ENCODE measurements at regions of chr5 and their contacts with region 1.

Region 1: DNA sequence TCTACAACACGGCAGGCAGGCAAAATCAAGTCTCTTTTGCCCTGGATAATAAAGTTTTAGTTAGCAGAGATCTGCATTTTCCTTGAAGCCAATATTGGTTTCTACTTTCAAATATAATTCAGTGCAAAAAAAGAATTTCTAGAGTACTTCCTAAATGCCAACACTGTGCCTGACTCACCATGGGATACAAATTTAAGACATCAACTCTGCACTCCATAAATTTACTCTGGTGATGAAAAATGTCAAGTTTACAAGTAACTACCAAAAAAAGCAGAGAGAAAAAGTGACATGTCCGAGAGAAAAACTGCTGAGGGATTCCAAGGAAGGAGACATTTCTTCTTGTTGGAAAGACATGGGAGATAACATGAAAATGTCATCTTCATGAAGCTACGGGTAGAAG is 119.7 kb downstream of the RAPGEF6 start:
- DNase-seq: no peak
- H3K4me3 ChIP-seq: no peak overlapping the region
- H3K27me3 ChIP-seq: no peaks in the 10 kb centered on the region
- CTCF ChIP-seq: no peak

Region 2: DNA sequence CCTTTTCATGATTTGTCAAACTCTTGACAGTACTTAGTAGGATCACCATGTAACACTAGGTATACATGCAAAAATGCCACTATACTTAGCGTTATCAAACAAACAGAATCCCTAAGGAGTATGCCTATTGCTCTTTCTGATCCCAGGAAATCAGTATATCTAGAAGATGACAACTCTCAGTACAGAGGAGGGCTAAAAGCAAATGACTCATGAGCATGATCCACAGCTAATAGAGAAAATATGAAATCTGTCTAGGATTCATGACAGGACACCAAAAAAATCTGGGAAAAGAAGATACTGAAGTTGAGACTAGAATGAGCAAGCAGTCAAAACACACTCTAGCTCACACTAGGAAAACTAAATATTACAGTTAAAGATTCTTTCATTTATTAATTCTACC is 30.5 kb after region 1 on chr5:
- CTCF ChIA-PET with region 1: no interaction called
- POLR2A ChIA-PET with region 1: no interaction called
- DNase-seq: no peak
- H3K4me3 ChIP-seq: no peak overlapping the region
- H3K27me3 ChIP-seq: no peaks in the 10 kb centered on the region
- CTCF ChIP-seq: no peak

Region 3: DNA sequence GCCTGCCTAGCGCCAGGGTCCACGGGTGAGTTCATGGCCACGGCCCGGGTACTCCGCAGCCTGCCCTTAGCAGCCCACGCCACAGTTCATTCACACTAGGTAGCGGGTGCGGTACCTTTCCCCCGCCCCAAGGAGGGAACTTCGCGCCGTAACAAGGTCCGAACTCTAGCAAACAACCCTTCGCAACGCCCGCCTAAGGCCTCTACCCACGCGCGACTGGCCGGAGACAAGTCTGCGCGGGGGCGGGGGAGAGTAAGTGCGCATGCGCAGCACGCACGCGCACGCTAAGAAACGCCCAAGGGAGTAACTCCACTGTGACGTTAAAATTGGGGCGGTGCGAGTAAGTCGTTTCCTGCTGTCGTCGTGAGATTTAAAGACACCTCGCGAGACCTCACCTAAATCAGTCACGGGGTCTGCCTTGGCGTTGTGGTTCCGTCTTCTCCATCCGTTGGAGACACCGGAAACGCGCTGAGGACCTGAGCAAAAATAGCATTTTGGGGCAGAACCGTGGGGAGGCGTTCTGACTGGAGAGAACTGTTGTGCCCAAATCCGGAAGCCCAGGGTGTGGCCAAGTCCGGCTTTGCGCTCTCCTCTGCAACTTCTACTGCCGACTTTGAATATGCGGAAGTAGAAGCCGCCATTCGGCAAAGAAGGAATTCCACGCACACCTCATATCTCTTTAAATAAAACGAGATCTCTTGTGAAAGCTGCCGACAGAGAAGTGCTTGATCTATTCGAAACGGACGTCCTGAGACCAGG is 119.8 kb after region 1 on chr5 and contains the start of gene RAPGEF6:
- CTCF ChIA-PET with region 1: no interaction called
- POLR2A ChIA-PET with region 1: interaction called, 15 read pairs
- DNase-seq: peak; percentile 100
- H3K4me3 ChIP-seq: peak within 1 kb of the TSS; percentile 95
- H3K27me3 ChIP-seq: no peaks in the 10 kb centered on the region
- CTCF ChIP-seq: 0 out of 2 replicates have a peak, but pooled peaks have one; percentile 1
- polyA plus RNA-seq, gene RAPGEF6: 6.2 and 10.6 TPM in 2 replicates

Region 4: DNA sequence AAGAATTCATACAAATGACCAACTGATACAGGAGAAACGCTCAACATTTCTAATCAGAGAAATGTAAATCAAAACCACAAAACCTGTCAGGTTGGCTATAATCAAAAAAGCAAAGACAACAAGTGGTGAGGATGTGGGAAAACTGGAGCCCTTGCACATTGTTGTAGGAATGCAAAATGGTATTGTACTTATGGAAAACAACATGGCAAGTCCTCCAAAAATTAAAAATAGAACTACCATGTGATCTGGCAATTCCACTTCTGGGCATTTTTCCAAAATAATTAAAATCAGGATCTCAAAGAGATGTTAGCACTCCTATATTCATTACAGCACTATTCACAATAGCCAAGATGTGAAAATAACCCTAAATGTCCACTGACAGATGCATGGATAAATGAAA is 205.4 kb after region 1 on chr5:
- CTCF ChIA-PET with region 1: no interaction called
- POLR2A ChIA-PET with region 1: no interaction called
- DNase-seq: no peak
- H3K4me3 ChIP-seq: no peak overlapping the region
- H3K27me3 ChIP-seq: no peaks in the 10 kb centered on the region
- CTCF ChIP-seq: no peak

Region 5: GRCh38 chr5:131854134-131854533 is 338.8 kb after region 1 on chr5:
- CTCF ChIA-PET with region 1: no interaction called
- POLR2A ChIA-PET with region 1: no interaction called
- DNase-seq: no peak
- H3K4me3 ChIP-seq: no peak overlapping the region
- H3K27me3 ChIP-seq: no peaks in the 10 kb centered on the region
- CTCF ChIP-seq: no peak